Dorsolateral prefrontal cortex (tissue), 120 donors: ENCODE measurements at regions of chr14 and their contacts with region 1.

Region 1: GRCh38 chr14:100383727-100384158 is 60.6 kb downstream of the SLC25A47 start:
- DNase-seq: peak in 9 of 10 donors; percentile 51 to 75 (median 64)
- H3K4me3 ChIP-seq: no peak overlapping the region
- H3K27ac ChIP-seq: peak overlapping the region in 1 of 59 donors; percentile 80
- H3K27me3 ChIP-seq: no peaks in the 10 kb centered on the region
- CTCF ChIP-seq: peak; percentile 44 to 90 (median 80)

Region 2: DNA sequence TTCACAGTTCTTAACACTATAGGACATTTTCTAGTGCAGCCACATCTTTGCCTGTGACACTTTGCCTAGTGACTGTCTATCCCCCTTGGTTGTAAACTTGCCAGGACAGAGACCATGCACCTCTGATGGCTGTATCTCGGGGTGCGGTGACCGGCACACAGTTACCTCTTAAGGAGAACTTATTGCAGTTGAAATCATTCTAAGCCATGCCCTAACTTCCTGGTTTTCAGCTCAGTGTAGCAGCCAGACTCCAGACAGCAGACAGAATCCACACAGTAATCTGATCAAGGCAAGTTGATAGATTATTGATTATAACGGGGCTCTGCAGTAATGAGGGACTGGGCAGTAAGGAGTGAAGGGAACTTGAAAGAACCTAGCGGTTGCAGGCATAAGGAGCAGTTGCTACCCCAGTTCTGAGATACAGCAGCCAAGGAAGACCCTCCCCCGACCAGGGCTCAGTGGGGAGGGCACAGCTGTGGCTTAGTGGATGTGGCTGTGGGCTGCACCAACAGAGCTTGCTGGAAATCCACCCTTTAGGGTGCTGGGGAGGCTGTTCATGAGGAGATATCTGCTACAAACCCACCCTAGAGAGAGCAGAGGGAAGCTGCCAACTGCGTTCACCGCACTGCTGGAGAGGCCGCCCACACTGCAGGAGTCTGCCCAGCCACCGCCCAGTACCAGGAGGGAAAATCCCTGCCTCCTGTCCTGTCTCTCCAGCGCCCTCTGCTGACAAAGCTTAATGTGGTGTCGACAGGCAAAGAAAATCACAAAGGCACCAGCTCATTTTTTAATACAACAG is 261.6 kb after region 1 on chr14:
- intact Hi-C with region 1: loop called (anchors 1 to 10 kb)
- DNase-seq: peak; percentile 53 to 83 (median 82)
- H3K4me3 ChIP-seq: peak overlapping the region in 1 of 59 donors; percentile 25
- H3K27ac ChIP-seq: no peak overlapping the region
- H3K27me3 ChIP-seq: no peaks in the 10 kb centered on the region
- CTCF ChIP-seq: peak; percentile 63 to 90 (median 79)

Region 3: GRCh38 chr14:100828031-100828769 is 444.5 kb after region 1 on chr14:
- intact Hi-C with region 1: loop called in 1 of 2 experiments (anchors 5 kb)
- DNase-seq: peak in 2 of 10 donors; percentile 54 to 57
- H3K4me3 ChIP-seq: peak overlapping the region in 58 of 59 donors; percentile 21 to 74 (median 53)
- H3K27ac ChIP-seq: no peak overlapping the region
- H3K27me3 ChIP-seq: peaks cover 0 to 39% (median 0%) of the 10 kb centered on the region in 45 donors
- CTCF ChIP-seq: peak; percentile 15 to 70 (median 50)

Region 4: GRCh38 chr14:101628471-101628966 is 1244.8 kb after region 1 on chr14:
- intact Hi-C with region 1: loop called (anchors 5 kb)
- DNase-seq: peak; percentile 64 to 86 (median 76)
- H3K4me3 ChIP-seq: peak overlapping the region in 57 of 59 donors; percentile 6 to 61 (median 40)
- H3K27ac ChIP-seq: peak overlapping the region in 21 of 59 donors; percentile 4 to 78 (median 41)
- H3K27me3 ChIP-seq: no peaks in the 10 kb centered on the region
- CTCF ChIP-seq: peak; percentile 97 to 100 (median 99)